Right ventricle myocardium inferior (tissue), 1 donor: ENCODE measurements at regions of chr18 and their contacts with region 1.

Region 1: DNA sequence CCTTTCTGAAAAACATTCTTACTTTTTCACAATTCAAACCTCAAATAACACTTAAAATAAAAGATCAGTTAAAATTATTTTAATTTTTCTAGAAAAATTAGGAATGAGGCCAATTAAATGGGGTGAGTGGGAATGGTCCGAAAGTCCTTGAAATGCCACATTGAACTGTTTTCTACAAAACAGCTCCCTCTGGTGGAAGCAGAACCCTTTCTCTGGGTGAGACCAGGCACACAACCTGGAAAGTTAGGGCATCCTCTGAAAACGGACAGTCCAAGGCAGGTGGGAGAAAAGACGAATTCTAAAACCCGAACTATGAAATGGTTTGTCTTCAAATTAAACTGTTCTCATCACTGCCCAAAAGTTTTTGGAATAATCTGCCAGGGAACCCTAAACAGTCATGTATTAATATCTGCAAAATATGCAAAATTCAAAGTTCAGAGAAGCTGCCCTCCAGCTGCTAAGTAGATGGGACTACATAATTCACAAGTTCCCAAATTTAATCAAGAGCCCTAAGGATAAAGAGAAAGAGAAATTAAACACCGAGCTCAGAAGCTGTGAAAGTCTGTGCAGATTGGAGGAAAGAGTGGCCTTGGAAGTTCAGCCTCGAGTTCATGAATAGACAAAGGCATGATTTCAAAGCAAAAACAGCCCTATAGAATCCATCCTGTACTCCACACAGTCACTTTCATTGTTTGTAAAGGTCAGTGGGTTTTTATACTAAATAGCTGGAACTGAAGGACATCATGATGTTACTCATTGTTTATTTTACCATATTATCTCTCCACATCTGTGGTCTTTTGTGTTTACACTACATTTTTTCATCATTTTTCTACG is 108.3 kb downstream of the PIEZO2 start:
- DNase-seq: no peak
- ATAC-seq: no peak

Region 2: DNA sequence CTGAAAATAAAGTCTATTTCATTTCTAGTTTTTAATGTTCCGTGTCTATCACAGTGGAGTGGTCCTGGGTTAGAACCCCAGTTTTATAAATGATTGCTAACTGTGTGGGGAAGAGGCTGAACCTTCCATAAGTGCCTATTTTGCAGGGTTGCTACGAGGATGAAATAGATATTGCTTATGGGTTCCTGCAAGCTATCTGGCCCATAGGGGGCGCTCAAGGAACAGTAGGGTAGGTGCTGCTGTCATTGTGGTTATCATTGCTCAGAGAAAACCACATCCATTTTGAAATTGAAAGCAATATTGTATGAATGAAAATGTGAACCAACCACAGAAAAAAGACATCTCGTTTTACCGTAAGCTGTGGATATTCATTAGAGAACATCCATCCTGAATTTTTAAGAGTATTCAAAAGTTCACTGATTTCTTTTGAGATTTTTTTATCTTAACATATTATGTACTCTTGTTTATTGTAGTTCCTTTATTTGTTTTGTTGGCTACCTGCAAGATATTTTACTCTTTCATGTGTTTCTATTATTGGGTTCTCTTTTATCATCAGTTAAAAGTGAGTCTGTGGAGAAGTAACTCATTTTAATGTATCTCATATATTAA is 253.6 kb before region 1 on chr18:
- intact Hi-C with region 1: loop called (anchors 10 kb)
- DNase-seq: peak; percentile 78
- ATAC-seq: no peak

Region 3: DNA sequence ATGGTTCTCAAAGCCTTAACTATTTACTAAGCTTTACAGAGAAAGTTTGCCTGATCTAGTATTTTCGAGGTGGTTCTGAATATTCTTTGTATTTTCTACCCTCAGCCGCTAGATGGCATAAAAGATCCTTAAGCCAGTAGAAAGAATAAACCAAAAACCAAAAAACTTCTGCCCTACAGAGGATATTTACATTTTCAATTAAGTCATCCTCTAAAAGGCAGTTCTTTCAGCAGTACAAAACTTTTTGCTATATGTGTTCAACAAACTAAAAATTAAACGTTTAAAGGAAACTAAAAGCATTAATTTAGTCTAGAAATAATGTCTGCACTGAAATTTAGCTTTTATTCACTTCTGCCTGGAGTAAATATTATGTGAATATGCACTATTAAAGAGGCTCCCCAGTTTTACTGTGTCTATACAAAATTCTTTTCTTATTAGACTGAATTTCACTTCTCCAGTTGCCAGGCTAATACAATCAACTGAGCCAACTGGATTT is 189.2 kb before region 1 on chr18:
- intact Hi-C with region 1: loop called (anchors 1 kb)
- DNase-seq: no peak
- ATAC-seq: no peak